ENCODE measurements at regions of chr1 and their contacts with region 1.

Region 1: DNA sequence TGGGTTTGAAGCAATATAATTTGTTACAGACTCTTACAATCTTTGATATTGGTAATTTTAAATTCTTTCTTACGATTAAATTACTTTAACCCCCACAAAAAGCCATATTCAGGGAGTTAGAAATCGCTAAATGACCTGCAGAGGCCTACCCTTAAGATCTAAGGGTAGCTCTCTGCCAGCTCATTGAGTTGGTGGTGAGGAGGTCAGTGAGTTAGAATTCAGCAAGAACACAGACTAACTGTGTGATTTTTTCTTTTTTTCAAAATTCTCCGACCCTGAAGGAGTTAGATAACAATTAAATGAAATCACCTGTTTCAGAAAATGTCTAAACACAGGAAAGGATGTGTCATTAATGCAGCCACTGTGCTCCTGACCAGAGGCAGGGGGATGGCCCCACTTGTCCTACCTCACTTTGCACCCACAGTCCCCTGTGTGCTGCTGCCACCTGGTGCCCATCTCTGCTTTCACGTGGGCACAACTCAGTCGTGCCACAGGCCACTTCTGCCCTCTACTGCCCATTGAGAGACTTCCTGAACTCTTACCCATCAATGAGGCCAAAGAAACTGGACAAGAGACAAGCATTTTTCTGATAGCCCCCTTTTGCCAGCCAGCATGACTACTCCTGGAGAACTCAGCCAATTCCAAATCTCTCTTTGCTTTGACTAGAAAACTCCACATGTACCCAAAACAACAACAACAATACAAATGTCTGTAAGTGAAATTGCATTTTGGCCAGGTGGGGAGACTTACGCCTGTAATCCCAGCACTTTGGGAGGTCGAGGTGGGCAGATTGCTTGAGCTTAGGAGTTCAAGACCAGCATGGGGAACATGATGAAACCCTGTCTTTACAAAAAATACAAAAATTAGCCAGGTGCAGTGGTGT is 8.4 kb downstream of the CFAP45 start:
- DNase-seq: peak; percentile 85 to 89 (median 86)
- ATAC-seq: peak; percentile 95 to 97 (median 96)
- H3K4me3 ChIP-seq: no peak overlapping the region
- H3K27ac ChIP-seq: no peak overlapping the region
- H3K4me1 ChIP-seq: no peaks in the 10 kb centered on the region
- H3K27me3 ChIP-seq: no peaks in the 10 kb centered on the region
- CTCF ChIP-seq: peak; percentile 97 to 100 (median 98)
- POLR2A ChIP-seq: no peak

Region 2: GRCh38 chr1:159161001-159161718 is 730.4 kb before region 1 on chr1:
- intact Hi-C with region 1: loop called in 1 of 2 experiments (anchors 10 kb)
- DNase-seq: peak; percentile 62 to 75 (median 69)
- ATAC-seq: peak; percentile 100
- H3K4me3 ChIP-seq: no peak overlapping the region
- H3K27ac ChIP-seq: no peak overlapping the region
- H3K4me1 ChIP-seq: peaks cover 0 to 4% (median 0%) of the 10 kb centered on the region in 4 donors
- H3K27me3 ChIP-seq: no peaks in the 10 kb centered on the region
- CTCF ChIP-seq: peak; percentile 88 to 97 (median 96)
- POLR2A ChIP-seq: no peak

Region 3: GRCh38 chr1:159653201-159653600 is 238.3 kb before region 1 on chr1:
- intact Hi-C with region 1: no loop called
- DNase-seq: no peak
- ATAC-seq: no peak
- H3K4me3 ChIP-seq: no peak overlapping the region
- H3K27ac ChIP-seq: no peak overlapping the region
- H3K4me1 ChIP-seq: no peaks in the 10 kb centered on the region
- H3K27me3 ChIP-seq: no peaks in the 10 kb centered on the region
- CTCF ChIP-seq: no peak
- POLR2A ChIP-seq: no peak

Region 4: GRCh38 chr1:159798893-159799292 is 92.6 kb before region 1 on chr1:
- intact Hi-C with region 1: loop called (anchors 5 kb)
- DNase-seq: peak; percentile 47 to 60 (median 53)
- ATAC-seq: peak; percentile 89 to 97 (median 94)
- H3K4me3 ChIP-seq: no peak overlapping the region
- H3K27ac ChIP-seq: no peak overlapping the region
- H3K4me1 ChIP-seq: no peaks in the 10 kb centered on the region
- H3K27me3 ChIP-seq: no peaks in the 10 kb centered on the region
- CTCF ChIP-seq: peak; percentile 74 to 84 (median 80)
- POLR2A ChIP-seq: no peak

Region 5: GRCh38 chr1:160006312-160006940 is 114.9 kb after region 1 on chr1:
- intact Hi-C with region 1: loop called in 1 of 2 experiments (anchors 5 kb)
- DNase-seq: peak; percentile 77 to 79 (median 78)
- ATAC-seq: peak; percentile 88 to 95 (median 92)
- H3K4me3 ChIP-seq: no peak overlapping the region
- H3K27ac ChIP-seq: no peak overlapping the region
- H3K4me1 ChIP-seq: peaks cover 0 to 4% (median 0%) of the 10 kb centered on the region in 4 donors
- H3K27me3 ChIP-seq: no peaks in the 10 kb centered on the region
- CTCF ChIP-seq: peak; percentile 79 to 95 (median 91)
- POLR2A ChIP-seq: no peak

Region 6: GRCh38 chr1:160193091-160193819 is 301.7 kb after region 1 on chr1:
- intact Hi-C with region 1: no loop called
- DNase-seq: peak; percentile 76 to 85 (median 84)
- ATAC-seq: peak; percentile 92 to 99 (median 96)
- H3K4me3 ChIP-seq: no peak overlapping the region
- H3K27ac ChIP-seq: no peak overlapping the region
- H3K4me1 ChIP-seq: peaks cover 0 to 5% (median 0%) of the 10 kb centered on the region in 4 donors
- H3K27me3 ChIP-seq: no peaks in the 10 kb centered on the region
- CTCF ChIP-seq: peak; percentile 92 to 98 (median 96)
- POLR2A ChIP-seq: no peak

Measured in right lobe of liver (tissue), 6 donors.